ENCODE measurements at regions of chr12 and their contacts with region 1.

Region 1: GRCh38 chr12:120649442-120650232 is 9.2 kb downstream of the CABP1 start:
- DNase-seq: no peak
- ATAC-seq: no peak

Region 2: GRCh38 chr12:120546050-120546386 is 103.6 kb before region 1 on chr12:
- intact Hi-C with region 1: no loop called
- DNase-seq: no peak
- ATAC-seq: no peak

Region 3: DNA sequence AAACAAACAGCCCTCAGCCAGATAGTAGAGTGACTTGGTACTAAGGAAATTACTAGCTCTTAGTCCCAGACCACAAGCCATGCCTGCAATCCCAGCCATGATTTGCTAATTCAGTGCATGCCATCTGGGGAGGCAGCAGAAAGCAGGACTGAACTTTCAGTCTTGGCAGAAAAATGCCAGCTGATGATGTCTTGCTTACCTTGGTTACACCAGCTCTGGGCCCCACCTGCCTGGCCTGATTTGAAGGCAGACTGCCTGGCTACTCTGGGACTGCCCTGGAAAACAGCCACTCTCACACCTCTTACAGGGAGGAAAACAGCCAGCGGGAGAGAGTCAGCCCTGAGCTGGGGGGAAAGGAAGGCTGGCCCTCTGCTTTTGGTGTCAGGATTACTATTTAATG is 56.0 kb after region 1 on chr12:
- intact Hi-C with region 1: no loop called
- DNase-seq: no peak
- ATAC-seq: no peak

Region 4: GRCh38 chr12:120719496-120720233 is 70.0 kb after region 1 on chr12:
- intact Hi-C with region 1: loop called (anchors 5 kb)
- DNase-seq: no peak
- ATAC-seq: no peak

Region 5: DNA sequence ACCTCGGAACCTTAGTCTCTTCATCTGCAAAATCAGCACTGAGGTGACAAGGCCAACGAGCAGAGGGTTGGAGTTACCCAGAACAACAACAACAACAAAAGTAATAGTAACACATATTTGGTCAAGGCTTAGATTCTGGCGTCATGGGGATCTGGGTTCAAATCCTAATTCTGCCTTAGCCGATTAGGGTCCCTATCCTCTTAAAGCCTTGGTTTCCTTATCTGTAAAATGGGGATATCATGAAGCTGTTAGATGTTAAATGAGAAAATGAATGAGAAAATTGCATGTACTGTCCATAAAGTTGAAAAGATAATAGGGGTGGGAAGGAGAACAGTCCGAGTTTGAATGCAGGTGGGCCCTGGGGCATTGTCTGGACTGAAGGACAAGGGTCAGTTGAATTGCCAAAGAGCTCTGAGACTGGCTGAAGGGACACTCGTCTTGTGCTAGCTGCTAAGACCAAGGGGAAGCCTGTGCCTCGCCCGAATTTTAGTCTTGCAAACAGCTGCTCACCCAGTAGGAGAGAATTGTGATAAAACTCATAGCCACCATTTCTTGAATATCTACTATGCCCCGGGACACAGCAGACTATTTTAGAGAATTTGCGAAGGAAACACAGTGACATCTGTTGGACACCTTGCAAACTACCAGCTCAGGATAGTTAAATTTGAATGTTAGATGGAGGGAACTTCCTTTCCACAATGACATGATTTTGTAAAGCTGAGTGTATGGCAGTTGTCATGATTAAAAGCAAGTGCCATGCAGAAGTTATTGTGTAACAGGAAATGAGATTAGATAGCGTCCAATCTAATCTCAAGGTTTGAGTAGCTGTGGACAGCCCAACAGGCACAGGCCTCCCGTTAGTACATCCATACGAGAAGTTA is 321.9 kb after region 1 on chr12:
- intact Hi-C with region 1: loop called (anchors 5 kb)
- DNase-seq: no peak
- ATAC-seq: peak; percentile 85